SK-N-SH (cell line): ENCODE measurements at regions of chr2 and their contacts with region 1.

Region 1: GRCh38 chr2:137947728-137948336 is 16.4 kb upstream of the HNMT start:
- DNase-seq: peak; percentile 32
- H3K4me3 ChIP-seq: no peak overlapping the region
- H3K27ac ChIP-seq: no peak overlapping the region
- H3K4me1 ChIP-seq: no peaks in the 10 kb centered on the region; a peak in 1 of 4 replicates
- H3K27me3 ChIP-seq: no peaks in the 10 kb centered on the region
- CTCF ChIP-seq: peak; percentile 81
- EP300 ChIP-seq: no peak
- RAD21 ChIP-seq: peak; percentile 85

Region 2: DNA sequence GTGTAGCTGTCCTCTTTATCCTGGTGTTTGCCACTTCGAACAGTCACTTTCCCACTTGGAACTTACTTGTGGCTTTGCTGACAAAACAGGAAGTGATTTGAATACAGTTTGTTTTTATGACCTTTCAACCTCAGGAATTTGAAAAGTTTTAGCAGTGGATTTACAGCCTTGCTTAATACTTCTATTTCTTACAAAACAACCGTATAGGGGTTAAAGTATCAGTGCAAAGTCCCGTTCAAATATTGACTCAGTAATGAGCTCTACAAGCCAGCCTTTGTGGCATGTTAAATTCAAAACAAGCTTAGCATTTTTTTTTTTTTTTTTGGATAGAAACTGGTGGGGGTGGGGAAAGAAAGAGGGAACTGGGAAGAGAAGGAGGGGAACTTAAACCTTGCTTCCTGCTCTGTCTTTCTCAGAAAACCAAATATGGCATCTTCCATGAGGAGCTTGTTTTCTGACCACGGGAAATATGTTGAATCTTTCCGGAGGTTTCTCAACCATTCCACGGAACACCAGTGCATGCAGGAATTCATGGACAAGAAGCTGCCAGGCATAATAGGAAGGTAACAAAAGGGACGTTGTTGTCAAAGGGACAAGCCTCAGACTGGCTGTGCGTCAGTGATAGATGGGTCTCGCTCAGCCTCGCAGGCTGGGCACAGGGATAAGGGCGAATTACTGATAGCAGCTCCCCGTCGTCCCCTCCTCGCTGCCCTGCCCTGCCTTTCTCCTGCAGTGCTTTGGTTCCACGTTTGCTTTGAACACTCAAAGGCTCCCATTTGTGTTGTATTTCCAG is 16.4 kb after region 1 on chr2 and contains the start of gene HNMT:
- CTCF ChIA-PET with region 1: interaction called, 11 read pairs
- POLR2A ChIA-PET with region 1: no interaction called
- DNase-seq: peak; percentile 59
- H3K4me3 ChIP-seq: peak within 1 kb of the TSS in 1 of 2 experiments; percentile 40; a peak in 2 of 4 replicates
- H3K27ac ChIP-seq: peak within 1 kb of the TSS; percentile 12 to 92; a peak in 3 of 4 replicates
- H3K4me1 ChIP-seq: peaks cover 5 to 24% of the 10 kb centered on the region in 2 experiments; a peak in 2 of 4 replicates
- H3K27me3 ChIP-seq: no peaks in the 10 kb centered on the region
- CTCF ChIP-seq: no peak
- EP300 ChIP-seq: peak in 1 of 2 experiments; percentile 6; a peak in 1 of 4 replicates
- RAD21 ChIP-seq: no peak; the same call in none of the 2 replicates
- polyA plus RNA-seq, gene HNMT: 1.8 and 2.5 TPM in 2 replicates

Region 3: GRCh38 chr2:137976274-137976673 is 28.4 kb after region 1 on chr2:
- CTCF ChIA-PET with region 1: no interaction called
- POLR2A ChIA-PET with region 1: no interaction called
- DNase-seq: no peak
- H3K4me3 ChIP-seq: no peak overlapping the region
- H3K27ac ChIP-seq: no peak overlapping the region
- H3K4me1 ChIP-seq: peaks cover 0 to 2% of the 10 kb centered on the region in 2 experiments; a peak in 2 of 4 replicates
- H3K27me3 ChIP-seq: no peaks in the 10 kb centered on the region
- CTCF ChIP-seq: no peak
- EP300 ChIP-seq: no peak
- RAD21 ChIP-seq: no peak

Region 4: GRCh38 chr2:138090330-138090729 is 142.5 kb after region 1 on chr2:
- CTCF ChIA-PET with region 1: interaction called, 21 read pairs
- POLR2A ChIA-PET with region 1: no interaction called
- DNase-seq: peak; percentile 34
- H3K4me3 ChIP-seq: no peak overlapping the region
- H3K27ac ChIP-seq: no peak overlapping the region
- H3K4me1 ChIP-seq: peaks cover 8 to 13% of the 10 kb centered on the region in 2 experiments; a peak in 3 of 4 replicates
- H3K27me3 ChIP-seq: no peaks in the 10 kb centered on the region
- CTCF ChIP-seq: peak; percentile 68
- EP300 ChIP-seq: no peak
- RAD21 ChIP-seq: peak; percentile 84

Region 5: DNA sequence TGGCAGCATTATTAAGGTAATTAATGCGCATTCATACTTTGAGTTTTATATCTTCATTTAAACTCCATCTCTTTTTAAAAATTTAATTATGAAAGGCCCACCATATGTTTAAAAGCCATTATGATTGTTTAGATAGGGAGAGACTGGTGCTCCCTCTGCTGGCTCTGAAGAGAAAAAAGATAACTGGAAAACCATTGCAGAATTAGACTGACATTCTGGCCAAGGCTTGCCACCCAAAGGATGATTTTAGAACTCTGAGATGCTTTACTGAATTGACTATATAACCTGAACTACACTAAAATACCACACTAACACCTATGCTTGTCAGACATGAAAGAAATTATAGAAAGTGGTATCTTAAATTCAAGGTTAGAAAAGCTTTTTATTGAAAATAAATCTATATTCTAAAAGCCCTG is 426.2 kb after region 1 on chr2:
- CTCF ChIA-PET with region 1: interaction called, 18 read pairs
- POLR2A ChIA-PET with region 1: no interaction called
- DNase-seq: peak; percentile 36
- H3K4me3 ChIP-seq: no peak overlapping the region
- H3K27ac ChIP-seq: no peak overlapping the region
- H3K4me1 ChIP-seq: no peaks in the 10 kb centered on the region; a peak in 1 of 4 replicates
- H3K27me3 ChIP-seq: no peaks in the 10 kb centered on the region
- CTCF ChIP-seq: peak; percentile 92
- EP300 ChIP-seq: no peak
- RAD21 ChIP-seq: peak; percentile 81